ENCODE measurements at regions of chr9 and their contacts with region 1.

Region 1: DNA sequence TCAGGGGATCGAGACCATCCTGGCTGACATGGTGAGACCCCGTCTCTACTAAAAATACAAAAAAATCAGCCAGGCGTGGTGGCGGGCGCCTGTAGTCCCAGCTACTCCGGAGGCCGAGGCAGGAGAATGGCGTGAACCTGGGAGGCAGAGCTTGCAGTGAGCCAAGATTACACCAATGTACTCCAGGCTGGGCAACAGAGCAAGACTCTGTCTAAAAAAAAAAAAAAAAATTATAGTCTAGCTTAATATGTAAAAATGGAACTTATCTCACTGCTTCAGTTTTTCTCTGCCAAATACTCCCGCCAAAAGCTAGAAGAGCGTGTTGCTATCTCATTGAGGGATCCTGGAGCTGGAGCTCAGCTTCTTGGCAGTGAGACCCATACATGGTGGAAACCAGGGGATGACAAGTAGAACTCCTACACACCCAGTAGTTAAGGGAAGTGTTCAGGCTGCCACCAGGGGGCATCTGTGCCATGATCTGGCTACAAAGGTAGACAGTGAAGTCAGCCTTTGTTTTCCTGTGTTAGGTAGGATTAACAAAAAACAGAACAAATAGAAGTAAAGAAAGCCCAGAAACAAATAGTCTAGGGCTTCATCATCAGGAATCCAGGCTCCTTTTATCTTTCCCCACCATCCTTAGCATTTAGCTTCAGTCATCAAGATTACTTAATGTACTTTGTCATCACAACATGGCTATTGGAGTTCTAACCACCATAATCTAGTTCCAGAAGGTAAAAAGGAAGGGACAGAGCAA is 33.6 kb upstream of the GLIPR2 start:
- DNase-seq: peak; percentile 31 to 63
- ATAC-seq: peak; percentile 77 to 86
- H3K4me3 ChIP-seq: no peak overlapping the region
- H3K27ac ChIP-seq: no peak overlapping the region
- H3K4me1 ChIP-seq: no peaks in the 10 kb centered on the region
- H3K27me3 ChIP-seq: no peaks in the 10 kb centered on the region
- CTCF ChIP-seq: peak; percentile 50 to 74 (median 68)
- POLR2A ChIP-seq: no peak

Region 2: DNA sequence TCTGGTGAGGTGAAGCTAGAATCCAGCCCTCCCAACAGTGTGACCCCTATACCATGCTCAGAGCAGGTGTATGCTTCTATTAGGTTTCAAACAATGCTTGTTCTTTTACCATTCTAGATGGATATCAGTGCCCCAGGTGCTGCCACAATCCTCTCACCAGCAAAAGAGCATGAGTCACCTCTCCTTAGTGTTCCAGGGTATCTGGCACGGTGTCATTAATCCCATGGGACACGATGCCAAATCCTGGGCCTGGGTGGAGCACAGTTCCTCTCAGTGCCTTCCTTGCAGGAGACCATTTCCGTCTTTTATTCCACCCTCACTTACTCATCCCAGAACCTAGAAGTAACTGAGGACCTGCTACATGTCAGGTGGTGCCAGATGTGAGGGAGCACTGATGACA is 231.4 kb before region 1 on chr9:
- in situ Hi-C with region 1: no loop called
- intact Hi-C with region 1: no loop called
- DNase-seq: no peak
- ATAC-seq: no peak
- H3K4me3 ChIP-seq: no peak overlapping the region
- H3K27ac ChIP-seq: no peak overlapping the region
- H3K4me1 ChIP-seq: no peaks in the 10 kb centered on the region
- H3K27me3 ChIP-seq: peaks cover 0 to 7% (median 0%) of the 10 kb centered on the region in 3 donors
- CTCF ChIP-seq: no peak
- POLR2A ChIP-seq: no peak

Region 3: GRCh38 chr9:36136272-36136893 is 33.5 kb after region 1 on chr9 and contains the start of gene GLIPR2:
- in situ Hi-C with region 1: no loop called
- intact Hi-C with region 1: loop called (anchors 2 kb)
- DNase-seq: peak; percentile 52 to 57
- ATAC-seq: peak; percentile 77 to 79
- H3K4me3 ChIP-seq: peak within 1 kb of the TSS; percentile 57 to 79 (median 60)
- H3K27ac ChIP-seq: peak within 1 kb of the TSS; percentile 39 to 71 (median 54)
- H3K4me1 ChIP-seq: peaks cover 7 to 13% of the 10 kb centered on the region in 2 donors
- H3K27me3 ChIP-seq: peaks cover 5 to 21% (median 17%) of the 10 kb centered on the region in 3 donors
- CTCF ChIP-seq: no peak
- POLR2A ChIP-seq: peak; percentile 67 to 82
- total RNA-seq, gene GLIPR2: 3.3 to 5.3 (median 3.9) TPM

Region 4: DNA sequence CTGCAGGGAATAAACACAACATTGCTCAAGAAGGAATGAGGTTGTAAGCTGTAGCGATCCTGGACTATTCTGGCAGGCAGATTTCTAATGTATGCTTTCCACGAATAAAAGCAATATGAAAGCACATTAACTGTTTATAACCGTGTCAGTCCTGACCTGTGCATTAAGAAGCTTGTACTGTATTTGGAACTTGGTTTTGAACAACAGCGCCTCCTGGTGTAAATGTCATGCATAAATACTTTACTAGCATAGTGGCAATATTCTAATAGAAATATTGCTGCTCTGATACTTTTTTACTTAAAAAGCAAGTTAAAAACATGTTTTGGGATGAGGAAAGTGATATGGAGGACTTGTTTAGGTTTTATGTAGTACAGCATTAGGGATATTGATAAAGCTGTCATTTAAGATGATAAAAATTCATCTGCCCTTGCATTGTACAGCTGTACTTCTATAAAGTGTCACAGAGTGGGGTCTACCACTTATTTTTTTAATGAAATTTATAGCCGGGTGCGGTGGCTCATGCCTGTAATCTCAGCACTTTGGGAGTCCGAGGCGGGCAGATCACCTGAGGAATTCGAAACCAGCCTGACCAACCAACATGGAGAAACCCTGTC is 226.0 kb after region 1 on chr9:
- in situ Hi-C with region 1: loop called in 1 of 4 experiments (anchors 10 kb)
- intact Hi-C with region 1: loop called (anchors 5 kb)
- DNase-seq: no peak
- ATAC-seq: peak; percentile 57 to 82
- H3K4me3 ChIP-seq: no peak overlapping the region
- H3K27ac ChIP-seq: no peak overlapping the region
- H3K4me1 ChIP-seq: peaks cover 4% of the 10 kb centered on the region in 2 donors
- H3K27me3 ChIP-seq: no peaks in the 10 kb centered on the region
- CTCF ChIP-seq: peak; percentile 64 to 81 (median 71)
- POLR2A ChIP-seq: no peak